ENCODE measurements at regions of chr9 and their contacts with region 1.

Region 1: DNA sequence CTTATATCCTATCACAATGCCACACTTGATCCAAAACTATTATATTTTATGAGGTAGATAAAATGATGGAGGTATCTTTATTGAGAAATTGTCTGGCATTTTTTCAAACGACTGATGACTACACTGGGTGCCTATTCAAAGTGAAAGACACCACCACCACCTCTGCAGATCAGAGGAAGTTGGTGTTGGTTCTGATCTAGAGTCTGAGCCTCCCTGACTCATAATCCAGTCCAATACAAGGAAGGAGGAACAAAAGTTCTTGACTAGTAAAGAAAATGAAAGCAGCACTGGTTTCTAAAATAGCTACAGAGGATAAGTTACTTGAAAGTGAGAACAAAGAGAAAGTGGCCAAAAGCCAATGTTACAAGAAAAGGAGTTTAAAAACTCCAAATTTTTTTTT is 139.9 kb downstream of the RFX3 start:
- DNase-seq: peak; percentile 75
- H3K4me3 Mint-ChIP-seq: no peak overlapping the region
- H3K27ac Mint-ChIP-seq: peak overlapping the region; percentile 56
- H3K4me1 Mint-ChIP-seq: peaks cover 49% of the 10 kb centered on the region
- H3K27me3 Mint-ChIP-seq: no peaks in the 10 kb centered on the region

Region 2: DNA sequence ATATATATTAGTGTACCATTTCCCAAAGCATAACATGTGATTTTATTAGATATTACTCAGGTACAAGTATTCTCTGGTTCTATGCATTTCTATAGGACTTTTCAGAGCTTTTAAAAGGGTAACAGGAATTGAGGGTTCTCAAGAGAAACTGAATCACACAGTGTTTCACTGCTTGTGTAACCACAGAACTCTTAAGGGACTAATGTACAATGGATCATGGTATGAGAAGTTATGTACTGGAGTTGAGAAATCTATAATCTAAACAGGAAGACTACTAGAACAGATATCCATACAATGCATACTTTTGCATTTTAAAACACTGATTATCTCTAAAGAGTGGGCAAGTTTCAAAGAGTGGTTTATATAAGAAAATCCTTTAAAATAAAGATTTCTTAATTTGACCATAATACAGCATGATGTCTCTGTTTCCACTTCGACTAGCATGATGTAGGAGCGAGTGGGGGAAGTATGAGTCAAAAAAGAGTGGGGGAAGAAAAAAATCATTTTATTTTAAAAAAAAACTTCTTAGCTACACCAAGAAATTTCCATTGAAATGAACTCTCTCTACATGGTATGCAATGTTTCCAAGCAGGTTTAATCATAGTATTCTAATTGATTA is 43.6 kb before region 1 on chr9:
- CTCF ChIA-PET with region 1: no interaction called
- intact Hi-C with region 1: loop called (anchors 1 kb)
- DNase-seq: no peak
- H3K4me3 Mint-ChIP-seq: no peak overlapping the region
- H3K27ac Mint-ChIP-seq: peak overlapping the region; percentile 42
- H3K4me1 Mint-ChIP-seq: peaks cover 44% of the 10 kb centered on the region
- H3K27me3 Mint-ChIP-seq: no peaks in the 10 kb centered on the region

Region 3: GRCh38 chr9:3403315-3403714 is 17.4 kb after region 1 on chr9:
- CTCF ChIA-PET with region 1: interaction called, 3 read pairs
- intact Hi-C with region 1: loop called (anchors 1 kb)
- DNase-seq: no peak
- H3K4me3 Mint-ChIP-seq: no peak overlapping the region
- H3K27ac Mint-ChIP-seq: no peak overlapping the region
- H3K4me1 Mint-ChIP-seq: peaks cover 35% of the 10 kb centered on the region
- H3K27me3 Mint-ChIP-seq: no peaks in the 10 kb centered on the region

Region 4: DNA sequence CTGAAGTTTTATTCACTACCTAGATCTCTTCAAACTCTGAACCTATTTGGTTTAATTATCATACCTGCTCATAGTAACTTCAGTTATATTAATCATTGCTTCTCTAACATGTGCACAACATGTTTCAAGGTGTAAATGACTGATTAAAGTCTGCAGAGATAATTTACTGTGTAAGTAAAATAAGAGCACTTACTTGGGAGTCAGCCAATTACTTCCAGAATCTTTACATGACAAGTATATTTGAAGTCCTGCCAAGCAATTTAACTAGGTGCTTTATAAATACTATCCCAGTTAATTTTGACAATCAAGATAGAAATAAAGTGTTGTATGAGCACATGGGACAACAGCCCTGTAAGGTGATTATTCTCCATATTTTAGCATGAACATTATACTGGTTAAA is 30.0 kb after region 1 on chr9:
- CTCF ChIA-PET with region 1: no interaction called
- intact Hi-C with region 1: no loop called
- DNase-seq: no peak
- H3K4me3 Mint-ChIP-seq: no peak overlapping the region
- H3K27ac Mint-ChIP-seq: no peak overlapping the region
- H3K4me1 Mint-ChIP-seq: no peaks in the 10 kb centered on the region
- H3K27me3 Mint-ChIP-seq: no peaks in the 10 kb centered on the region

Region 5: DNA sequence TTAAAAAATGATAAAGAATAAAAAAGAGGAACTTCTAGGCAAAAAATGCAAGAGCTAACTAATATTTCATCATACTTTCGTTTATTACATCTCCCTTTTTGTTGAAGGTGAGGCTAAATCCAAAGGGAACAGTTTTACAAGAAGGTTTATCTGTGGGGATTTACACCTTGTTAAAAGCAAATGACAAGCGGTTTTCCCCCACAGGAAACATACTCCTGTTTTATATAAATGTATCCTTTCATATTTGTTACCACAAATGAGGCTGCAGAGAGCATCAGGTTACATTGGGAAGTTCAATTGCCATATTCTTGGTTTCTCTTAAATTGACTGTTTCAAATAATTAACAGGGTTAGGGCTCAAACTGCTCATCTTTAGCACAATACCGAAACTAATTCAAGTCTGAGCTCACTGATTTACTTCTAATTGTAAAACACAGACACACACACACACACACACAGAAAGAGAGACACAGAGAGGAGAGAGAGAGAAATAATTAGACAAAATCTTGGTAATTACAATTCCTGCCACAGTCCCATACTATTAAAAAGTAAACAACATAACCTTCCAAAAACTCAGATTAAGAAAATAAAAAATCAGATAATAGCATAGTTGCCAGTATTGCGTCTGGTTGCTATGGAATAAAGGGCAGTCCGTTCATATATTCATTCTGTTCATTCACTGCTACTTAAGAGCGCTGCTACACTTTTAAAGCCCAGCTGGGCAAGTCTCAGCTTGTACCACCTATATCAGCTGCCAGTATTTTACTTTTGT is 122.8 kb after region 1 on chr9:
- CTCF ChIA-PET with region 1: no interaction called
- intact Hi-C with region 1: loop called (anchors 5 kb)
- DNase-seq: no peak
- H3K4me3 Mint-ChIP-seq: peak overlapping the region; percentile 51
- H3K27ac Mint-ChIP-seq: peak overlapping the region; percentile 85
- H3K4me1 Mint-ChIP-seq: peaks cover 63% of the 10 kb centered on the region
- H3K27me3 Mint-ChIP-seq: no peaks in the 10 kb centered on the region

Region 6: DNA sequence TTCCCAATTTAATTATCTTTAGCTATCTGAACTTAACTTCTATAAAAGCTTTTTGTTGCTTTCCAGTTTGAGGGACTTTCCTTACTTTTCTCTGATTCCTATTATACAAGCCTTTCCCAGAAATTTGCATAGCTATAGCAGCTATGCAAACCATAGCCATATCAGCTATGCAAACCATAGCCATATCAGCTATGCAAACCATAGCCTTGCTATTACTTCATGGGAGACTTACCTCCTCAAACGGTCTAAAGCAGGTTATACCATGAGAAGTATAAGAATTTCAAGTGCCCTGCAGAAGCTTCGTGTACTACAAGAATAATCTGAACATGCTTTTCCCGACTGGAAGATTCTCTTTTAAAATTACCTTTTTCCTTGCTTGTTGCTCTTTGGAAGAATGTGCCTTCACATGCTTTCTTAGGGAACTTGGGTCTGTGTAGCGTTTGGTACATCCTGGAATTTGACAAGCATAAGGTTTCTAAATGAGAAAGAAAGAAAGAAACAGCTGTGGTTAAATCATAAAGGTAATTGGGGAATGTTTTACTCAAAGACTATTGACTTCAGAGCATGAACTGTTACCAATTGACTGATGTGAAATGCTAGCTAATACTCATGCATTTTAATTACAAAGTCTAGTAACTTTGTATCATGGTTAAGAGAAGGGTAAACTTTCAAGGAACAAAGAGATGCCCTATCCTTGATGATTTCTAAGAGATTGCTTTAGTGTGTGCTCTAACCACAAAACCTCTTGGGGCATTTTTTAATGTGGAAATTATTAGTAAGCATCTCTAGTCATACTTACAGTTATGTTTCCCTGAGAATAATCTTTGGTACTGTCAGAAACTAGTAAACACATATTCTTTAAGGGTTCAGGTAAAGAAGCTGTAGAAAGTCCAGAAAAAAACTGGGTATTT is 546.4 kb after region 1 on chr9:
- CTCF ChIA-PET with region 1: no interaction called
- intact Hi-C with region 1: loop called (anchors 5 kb)
- DNase-seq: no peak
- H3K4me3 Mint-ChIP-seq: no peak overlapping the region
- H3K27ac Mint-ChIP-seq: peak overlapping the region; percentile 73
- H3K4me1 Mint-ChIP-seq: peaks cover 22% of the 10 kb centered on the region
- H3K27me3 Mint-ChIP-seq: peaks cover 2% of the 10 kb centered on the region

Region 7: DNA sequence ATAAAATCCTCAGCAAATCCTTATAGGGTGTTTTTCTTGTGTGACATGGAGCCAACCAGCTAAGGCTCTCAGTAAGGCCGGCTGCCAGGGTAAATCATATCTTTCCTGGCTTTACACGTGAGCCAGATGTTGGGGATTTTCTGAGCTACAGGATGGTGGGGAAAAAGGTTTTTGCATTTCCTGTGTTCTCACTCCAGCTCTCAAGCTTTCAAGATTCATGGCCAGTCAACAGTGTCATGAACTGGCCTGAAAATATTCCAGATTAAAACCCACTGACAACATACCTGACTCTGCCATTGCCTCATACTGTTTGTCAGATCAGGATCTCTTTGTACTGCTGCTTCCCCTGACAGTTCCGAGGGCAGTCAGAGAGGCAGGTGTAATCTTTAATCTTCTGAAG is 607.1 kb after region 1 on chr9:
- CTCF ChIA-PET with region 1: no interaction called
- intact Hi-C with region 1: no loop called
- DNase-seq: no peak
- H3K4me3 Mint-ChIP-seq: no peak overlapping the region
- H3K27ac Mint-ChIP-seq: no peak overlapping the region
- H3K4me1 Mint-ChIP-seq: peaks cover 3% of the 10 kb centered on the region
- H3K27me3 Mint-ChIP-seq: peaks cover 3% of the 10 kb centered on the region

Measured in activated naive CD4-positive, alpha-beta T cell treated with anti-CD3 and anti-CD28 coated beads for 36 hours (primary cell).